ENCODE measurements at regions of chr20 and their contacts with region 1.

Region 1: GRCh38 chr20:17958373-17959256 is 10.0 kb downstream of the SNX5 start:
- DNase-seq: no peak
- ATAC-seq: no peak
- H3K4me3 ChIP-seq: peak overlapping the region in 1 of 5 experiments; percentile 22
- H3K4me3 Mint-ChIP-seq: peak overlapping the region; percentile 77
- H3K27ac ChIP-seq: peak overlapping the region; percentile 4 to 77
- H3K27ac Mint-ChIP-seq: peak overlapping the region; percentile 86
- H3K4me1 ChIP-seq: peaks cover 88 to 96% of the 10 kb centered on the region in 2 donors
- H3K4me1 Mint-ChIP-seq: peaks cover 91% of the 10 kb centered on the region
- H3K27me3 ChIP-seq: no peaks in the 10 kb centered on the region
- H3K27me3 Mint-ChIP-seq: no peaks in the 10 kb centered on the region
- CTCF ChIP-seq: no peak

Region 2: DNA sequence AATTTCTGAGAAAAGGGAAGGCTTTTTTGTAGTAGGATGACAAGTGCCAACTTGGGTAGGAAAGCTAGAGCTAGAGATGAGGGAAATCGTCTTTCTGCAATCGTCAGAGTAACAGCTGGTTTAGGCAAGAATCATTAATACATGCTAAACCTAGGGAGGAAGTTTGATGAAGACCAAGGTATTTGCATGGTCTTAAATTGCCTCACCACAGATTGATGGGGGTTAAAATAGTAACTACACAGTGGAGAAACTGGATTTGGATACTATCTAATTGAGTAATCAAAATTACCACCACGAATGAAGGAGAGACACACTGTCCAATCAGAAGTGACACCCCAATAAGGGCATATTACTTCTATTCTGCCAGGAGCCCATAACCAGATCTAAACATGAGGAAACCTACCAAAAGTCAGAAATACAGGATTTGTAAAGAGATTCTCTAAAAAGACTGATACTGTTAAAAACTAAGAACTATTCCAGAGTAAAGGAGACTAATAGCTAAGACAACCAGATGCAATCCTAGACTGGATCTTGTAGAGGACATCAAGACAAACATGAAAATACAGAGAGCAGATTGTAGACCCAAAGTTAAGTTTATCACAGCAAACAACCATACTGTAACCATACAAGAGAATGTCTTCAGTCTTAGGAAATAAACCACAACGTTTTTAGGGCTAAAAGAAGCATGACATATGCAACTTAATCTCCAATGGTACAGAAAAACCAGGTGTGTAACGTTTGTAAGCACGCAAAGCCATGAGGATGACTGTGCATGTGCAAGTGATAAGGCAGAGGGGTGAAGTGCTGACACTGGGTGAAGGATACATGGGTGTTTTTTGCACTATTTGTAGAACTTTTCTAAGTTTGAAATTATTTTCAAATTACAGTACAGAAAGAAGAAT is 11.8 kb before region 1 on chr20:
- CTCF ChIA-PET with region 1: interaction called, 6 read pairs
- POLR2A ChIA-PET with region 1: no interaction called
- intact Hi-C with region 1: loop called (anchors 2 kb)
- DNase-seq: no peak
- ATAC-seq: no peak
- H3K4me3 ChIP-seq: no peak overlapping the region
- H3K4me3 Mint-ChIP-seq: no peak overlapping the region
- H3K27ac ChIP-seq: no peak overlapping the region
- H3K27ac Mint-ChIP-seq: no peak overlapping the region
- H3K4me1 ChIP-seq: peaks cover 22 to 28% of the 10 kb centered on the region in 2 donors
- H3K4me1 Mint-ChIP-seq: peaks cover 40% of the 10 kb centered on the region
- H3K27me3 ChIP-seq: no peaks in the 10 kb centered on the region
- H3K27me3 Mint-ChIP-seq: no peaks in the 10 kb centered on the region
- CTCF ChIP-seq: no peak

Region 3: DNA sequence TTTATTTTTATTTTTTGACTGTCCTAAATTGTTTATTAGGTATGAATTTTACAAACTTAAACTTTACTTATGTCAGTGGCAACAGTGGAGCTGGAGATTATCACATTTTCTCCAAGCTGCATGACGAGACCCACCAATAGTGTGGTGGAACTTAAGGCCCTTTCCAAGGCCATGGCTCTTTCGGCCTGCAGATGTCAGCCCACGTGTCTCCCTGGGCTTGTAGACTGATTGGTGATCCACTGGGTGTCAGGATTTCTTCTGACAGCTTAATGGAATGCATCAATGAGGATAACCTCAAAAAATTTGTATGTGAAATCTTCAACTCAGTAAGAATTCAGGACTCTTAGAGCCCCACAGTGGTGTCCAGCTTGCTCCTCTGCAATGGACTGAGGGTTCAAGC is 131.4 kb after region 1 on chr20:
- CTCF ChIA-PET with region 1: no interaction called
- POLR2A ChIA-PET with region 1: no interaction called
- intact Hi-C with region 1: no loop called
- DNase-seq: no peak
- ATAC-seq: no peak
- H3K4me3 ChIP-seq: no peak overlapping the region
- H3K4me3 Mint-ChIP-seq: no peak overlapping the region
- H3K27ac ChIP-seq: no peak overlapping the region
- H3K27ac Mint-ChIP-seq: no peak overlapping the region
- H3K4me1 ChIP-seq: no peaks in the 10 kb centered on the region
- H3K4me1 Mint-ChIP-seq: no peaks in the 10 kb centered on the region
- H3K27me3 ChIP-seq: peaks cover 0 to 3% (median 0%) of the 10 kb centered on the region in 4 experiments
- H3K27me3 Mint-ChIP-seq: peaks cover 17% of the 10 kb centered on the region
- CTCF ChIP-seq: no peak